Heart left ventricle (tissue), 16 donors: ENCODE measurements at regions of chr9 and their contacts with region 1.

Region 1: GRCh38 chr9:72592502-72593403 is 71.3 kb downstream of the TMC1 start:
- DNase-seq: peak in 1 of 5 donors; percentile 24
- ATAC-seq: peak; percentile 55 to 80 (median 78)
- H3K4me3 ChIP-seq: no peak overlapping the region
- H3K27ac ChIP-seq: peak overlapping the region in 1 of 12 donors; percentile 67
- H3K4me1 ChIP-seq: peaks cover 0 to 42% (median 3%) of the 10 kb centered on the region in 12 donors
- H3K27me3 ChIP-seq: no peaks in the 10 kb centered on the region
- CTCF ChIP-seq: peak; percentile 77 to 92 (median 85)
- POLR2A ChIP-seq: no peak

Region 2: DNA sequence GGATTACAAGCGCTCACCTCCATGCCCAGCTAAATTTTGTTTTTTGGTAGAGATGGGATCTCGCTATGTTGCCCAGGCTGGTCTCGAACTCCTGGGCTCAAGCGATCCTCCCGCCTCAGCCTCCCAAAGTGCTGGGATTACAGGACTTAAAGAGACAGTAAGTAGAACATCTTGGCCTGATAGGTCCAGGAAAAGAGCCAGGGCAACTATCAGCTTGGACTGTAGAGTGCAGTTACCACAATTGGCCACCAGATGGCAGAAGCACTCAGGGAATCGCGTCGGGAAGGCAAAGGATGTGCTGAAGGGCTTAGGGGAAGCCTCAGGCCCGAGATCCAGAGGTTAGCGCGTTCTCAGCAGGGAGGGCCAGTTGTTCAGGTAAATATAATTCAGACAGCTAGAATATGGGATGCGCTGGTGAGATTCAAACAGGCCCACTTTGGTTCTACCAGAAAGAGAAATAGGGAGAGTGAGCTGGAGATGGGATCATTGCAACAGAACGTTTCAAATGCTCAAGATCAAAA is 553.8 kb before region 1 on chr9:
- intact Hi-C with region 1: loop called in 3 of 10 experiments (anchors 5 to 10 kb)
- DNase-seq: peak; percentile 64 to 72 (median 71)
- ATAC-seq: peak; percentile 62 to 90 (median 86)
- H3K4me3 ChIP-seq: no peak overlapping the region
- H3K27ac ChIP-seq: no peak overlapping the region
- H3K4me1 ChIP-seq: peaks cover 0 to 9% (median 0%) of the 10 kb centered on the region in 12 donors
- H3K27me3 ChIP-seq: no peaks in the 10 kb centered on the region
- CTCF ChIP-seq: peak; percentile 87 to 99 (median 97)
- POLR2A ChIP-seq: no peak

Region 3: DNA sequence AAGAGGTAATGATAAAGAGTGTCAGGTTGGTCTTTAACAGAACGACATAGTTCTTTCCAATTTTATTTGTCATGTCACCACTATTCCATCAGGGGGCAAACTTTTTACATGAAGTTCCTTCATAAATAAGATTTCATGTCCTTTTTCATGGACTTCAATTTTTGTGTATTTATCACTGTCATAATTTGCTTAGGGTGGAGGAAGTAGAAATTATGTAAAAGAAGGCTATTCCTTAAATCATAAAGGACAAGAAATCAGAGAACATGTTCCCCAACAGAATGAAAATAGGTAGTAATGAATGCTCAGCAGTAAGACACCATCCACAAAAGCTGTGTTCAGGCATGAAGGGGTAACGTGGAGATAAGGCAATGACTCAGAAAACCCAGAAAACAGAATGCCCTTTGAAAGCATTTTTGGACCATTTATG is 300.5 kb before region 1 on chr9:
- intact Hi-C with region 1: loop called in 8 of 10 experiments (anchors 1 to 5 kb)
- DNase-seq: no peak
- ATAC-seq: peak in 1 of 4 donors; percentile 65
- H3K4me3 ChIP-seq: no peak overlapping the region
- H3K27ac ChIP-seq: peak overlapping the region in 1 of 12 donors; percentile 74
- H3K4me1 ChIP-seq: peaks cover 0 to 28% (median 3%) of the 10 kb centered on the region in 12 donors
- H3K27me3 ChIP-seq: no peaks in the 10 kb centered on the region
- CTCF ChIP-seq: peak; percentile 39 to 80 (median 66)
- POLR2A ChIP-seq: no peak

Region 4: DNA sequence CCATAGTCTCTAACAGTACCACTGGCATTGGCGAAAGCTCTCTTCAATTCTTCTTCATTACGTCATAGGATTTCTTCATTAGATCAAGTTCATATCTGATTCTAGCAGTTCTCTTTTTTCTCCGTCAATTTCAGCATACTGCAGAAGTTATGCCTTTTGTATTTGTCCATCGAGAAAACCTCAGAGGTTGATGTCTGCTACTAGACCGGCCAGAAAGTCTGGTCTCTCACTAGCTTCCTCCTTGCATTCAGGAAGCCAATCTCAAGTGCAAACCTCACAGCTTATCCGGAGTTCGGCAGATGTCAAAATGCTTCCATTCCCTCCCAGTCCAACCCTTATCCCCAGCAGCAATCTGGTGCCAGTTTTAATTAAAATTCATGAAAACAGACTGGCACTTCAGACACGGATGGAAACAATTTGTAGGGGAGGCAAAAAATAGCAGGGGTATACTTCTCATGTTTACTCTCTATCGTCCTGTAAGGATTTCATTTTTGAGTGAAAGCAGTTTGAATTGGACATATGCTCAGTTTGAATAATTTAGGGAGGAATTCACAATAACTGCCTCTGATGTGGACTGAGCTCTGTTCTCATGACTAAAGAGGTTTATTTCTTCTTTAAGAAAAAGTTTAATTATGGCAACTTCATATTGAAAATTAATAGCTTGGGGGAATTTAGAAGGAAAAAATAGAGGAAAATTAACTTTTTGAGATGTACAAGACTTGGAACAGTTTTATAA is 127.7 kb before region 1 on chr9:
- intact Hi-C with region 1: loop called in 1 of 10 experiments (anchors 10 kb)
- DNase-seq: peak in 1 of 5 donors; percentile 12
- ATAC-seq: peak in 3 of 4 donors; percentile 51 to 65 (median 53)
- H3K4me3 ChIP-seq: peak overlapping the region in 5 of 12 donors; percentile 2 to 32 (median 24)
- H3K27ac ChIP-seq: peak overlapping the region in 6 of 12 donors; percentile 8 to 72 (median 20)
- H3K4me1 ChIP-seq: peaks cover 0 to 17% (median 0%) of the 10 kb centered on the region in 12 donors
- H3K27me3 ChIP-seq: no peaks in the 10 kb centered on the region
- CTCF ChIP-seq: no peak
- POLR2A ChIP-seq: no peak

Region 5: GRCh38 chr9:72812559-72813111 is 219.9 kb after region 1 on chr9:
- intact Hi-C with region 1: loop called in 1 of 10 experiments (anchors 10 kb)
- DNase-seq: peak in 1 of 5 donors; percentile 27
- ATAC-seq: peak in 1 of 4 donors; percentile 52
- H3K4me3 ChIP-seq: no peak overlapping the region
- H3K27ac ChIP-seq: no peak overlapping the region
- H3K4me1 ChIP-seq: peaks cover 0 to 3% (median 0%) of the 10 kb centered on the region in 12 donors
- H3K27me3 ChIP-seq: no peaks in the 10 kb centered on the region
- CTCF ChIP-seq: no peak
- POLR2A ChIP-seq: no peak